ENCODE measurements at regions of chr15 and their contacts with region 1.

Region 1: DNA sequence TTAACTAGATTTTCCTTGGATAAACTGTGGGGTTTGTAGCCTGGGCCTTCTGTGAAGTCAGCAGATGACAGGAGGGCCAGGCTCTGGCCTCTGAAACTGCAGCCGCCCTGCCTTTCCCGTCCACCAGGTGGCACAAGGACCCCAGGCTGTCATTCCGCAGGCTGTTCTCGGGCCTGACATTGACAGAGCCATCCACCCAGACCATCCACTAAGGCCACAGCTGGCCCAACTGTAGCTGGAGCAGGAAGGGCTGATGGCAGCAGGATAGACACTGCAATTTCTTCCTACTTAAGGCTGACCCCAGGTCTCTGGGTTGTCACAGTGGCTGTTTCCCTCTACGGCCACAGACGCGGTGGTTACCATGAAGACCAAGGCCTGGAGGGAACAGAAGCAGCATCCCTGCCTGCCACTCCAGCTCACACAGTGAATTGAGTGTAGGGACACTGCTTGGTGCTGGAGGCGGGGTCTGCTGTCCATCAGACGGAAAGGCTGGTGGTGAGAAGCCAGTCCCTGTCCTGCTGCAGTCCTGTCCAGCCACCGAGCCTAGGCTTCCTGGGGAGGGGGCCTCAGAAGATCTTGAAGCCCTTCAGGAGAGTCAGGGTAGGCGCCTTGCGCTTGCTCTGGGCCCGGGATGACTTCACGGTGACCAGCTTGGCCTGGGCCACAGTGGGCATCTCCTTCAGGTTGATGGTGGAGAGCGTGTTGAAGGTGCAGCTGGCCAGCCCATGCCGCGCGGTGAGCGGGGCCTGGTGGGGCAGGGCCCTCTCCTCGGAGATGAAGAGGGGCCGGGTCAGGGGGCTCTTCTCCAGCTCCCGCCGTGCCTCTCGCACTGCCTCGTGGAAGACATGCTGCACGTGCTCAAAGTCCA is 9.4 kb downstream of the SLC51B start:
- DNase-seq: peak; percentile 79
- ATAC-seq: peak; percentile 57
- H3K4me3 Mint-ChIP-seq: no peak overlapping the region
- H3K27ac Mint-ChIP-seq: no peak overlapping the region
- H3K4me1 Mint-ChIP-seq: peaks cover 10% of the 10 kb centered on the region
- H3K27me3 Mint-ChIP-seq: no peaks in the 10 kb centered on the region

Region 2: DNA sequence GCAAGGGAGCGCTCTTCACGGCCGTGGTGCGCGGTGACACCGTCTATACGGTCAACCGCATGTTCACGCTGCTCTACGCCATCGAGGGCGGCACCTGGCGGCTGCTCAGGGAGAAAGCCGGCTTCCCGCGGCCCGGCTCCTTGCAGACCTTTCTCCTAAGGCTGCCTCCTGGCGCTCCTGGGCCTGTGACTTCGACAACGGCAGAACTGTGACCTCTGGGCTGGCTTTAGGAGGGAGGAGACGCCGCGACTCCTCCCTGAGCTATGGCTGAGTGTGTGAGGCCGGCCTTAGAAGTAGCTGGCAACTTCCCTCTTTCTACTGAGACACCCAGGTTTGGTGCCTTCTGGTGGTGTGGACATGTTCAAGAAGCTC is 23.4 kb after region 1 on chr15:
- CTCF ChIA-PET with region 1: interaction called, 8 read pairs
- POLR2A ChIA-PET with region 1: no interaction called
- intact Hi-C with region 1: loop called (anchors 1 to 2 kb)
- DNase-seq: peak; percentile 80
- ATAC-seq: peak; percentile 73
- H3K4me3 Mint-ChIP-seq: no peak overlapping the region
- H3K27ac Mint-ChIP-seq: no peak overlapping the region
- H3K4me1 Mint-ChIP-seq: peaks cover 18% of the 10 kb centered on the region
- H3K27me3 Mint-ChIP-seq: peaks cover 25% of the 10 kb centered on the region

Region 3: GRCh38 chr15:65101411-65101890 is 46.9 kb after region 1 on chr15:
- CTCF ChIA-PET with region 1: interaction called, 5 read pairs
- POLR2A ChIA-PET with region 1: no interaction called
- intact Hi-C with region 1: loop called (anchors 1 to 5 kb)
- DNase-seq: peak; percentile 82
- ATAC-seq: peak; percentile 69
- H3K4me3 Mint-ChIP-seq: no peak overlapping the region
- H3K27ac Mint-ChIP-seq: no peak overlapping the region
- H3K4me1 Mint-ChIP-seq: peaks cover 2% of the 10 kb centered on the region
- H3K27me3 Mint-ChIP-seq: no peaks in the 10 kb centered on the region